WTC11 (cell line): ENCODE measurements at regions of chr14 and their contacts with region 1.

Region 1: DNA sequence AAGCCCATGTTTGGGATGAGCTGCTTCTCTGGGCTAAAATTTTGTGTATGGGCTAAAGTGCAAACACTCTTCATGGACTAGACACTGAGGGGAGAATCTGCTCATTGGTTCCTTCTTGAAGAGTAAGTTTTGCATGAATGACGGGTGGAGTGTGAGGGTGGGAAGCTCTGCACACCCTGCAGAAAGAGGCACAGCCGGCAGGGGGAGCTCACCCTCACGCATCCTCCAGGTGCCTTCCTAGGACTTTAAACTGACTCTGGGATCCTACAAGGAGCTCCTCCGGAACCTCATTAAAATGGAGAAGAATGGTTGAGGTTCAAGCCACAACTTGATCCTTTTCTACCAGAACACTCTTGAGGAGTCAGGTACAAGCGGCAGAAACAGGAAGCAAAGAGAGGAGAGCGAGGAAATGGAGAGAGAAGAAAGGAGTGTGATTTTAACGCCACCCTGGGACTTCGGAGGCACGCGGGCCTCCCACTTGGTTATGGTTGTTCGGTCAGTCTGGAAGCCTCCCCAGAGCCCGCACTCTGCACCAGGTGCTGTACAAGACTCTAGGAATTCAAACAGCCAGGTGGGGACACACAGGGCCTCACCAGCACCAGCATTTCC is 87.5 kb downstream of the SETD3 start:
- DNase-seq: peak; percentile 74
- ATAC-seq: peak; percentile 71
- H3K4me3 Mint-ChIP-seq: no peak overlapping the region
- H3K27ac Mint-ChIP-seq: peak overlapping the region; percentile 92; the same call in 1 of the 2 replicates
- H3K4me1 Mint-ChIP-seq: peaks cover 37% of the 10 kb centered on the region
- H3K27me3 Mint-ChIP-seq: no peaks in the 10 kb centered on the region
- CTCF ChIP-seq: peak; percentile 89

Region 2: GRCh38 chr14:98994561-98994960 is 398.6 kb before region 1 on chr14:
- CTCF ChIA-PET with region 1: no interaction called
- POLR2A ChIA-PET with region 1: no interaction called
- DNase-seq: no peak
- ATAC-seq: no peak
- H3K4me3 Mint-ChIP-seq: no peak overlapping the region
- H3K27ac Mint-ChIP-seq: no peak overlapping the region
- H3K4me1 Mint-ChIP-seq: peaks cover 32% of the 10 kb centered on the region
- H3K27me3 Mint-ChIP-seq: peaks cover 16% of the 10 kb centered on the region
- CTCF ChIP-seq: no peak

Region 3: DNA sequence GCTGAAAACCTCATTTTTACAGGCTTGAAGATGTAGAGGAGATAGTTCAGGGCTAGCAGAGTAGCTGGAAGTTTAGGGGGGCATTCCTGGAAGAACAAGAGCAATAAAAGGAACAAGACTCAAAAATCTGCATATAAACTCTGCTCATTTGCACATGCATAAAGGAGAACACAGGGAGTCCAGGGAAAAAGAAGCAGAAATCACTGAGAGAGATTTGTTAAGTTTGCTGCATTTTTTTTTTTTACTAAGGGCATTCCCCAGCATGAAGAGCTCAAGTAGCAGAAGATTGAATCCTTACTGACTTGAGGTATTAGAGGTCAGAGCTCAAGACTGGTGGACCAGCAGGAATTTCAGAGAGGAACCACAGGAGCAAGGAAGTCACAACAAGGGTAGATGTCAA is 93.0 kb before region 1 on chr14:
- CTCF ChIA-PET with region 1: interaction called, 13 read pairs
- POLR2A ChIA-PET with region 1: no interaction called
- DNase-seq: no peak
- ATAC-seq: peak; percentile 85
- H3K4me3 Mint-ChIP-seq: no peak overlapping the region; the same call in 1 of the 2 replicates
- H3K27ac Mint-ChIP-seq: peak overlapping the region; percentile 83
- H3K4me1 Mint-ChIP-seq: peaks cover 12% of the 10 kb centered on the region
- H3K27me3 Mint-ChIP-seq: peaks cover 7% of the 10 kb centered on the region
- CTCF ChIP-seq: no peak

Region 4: GRCh38 chr14:99351166-99352007 is 41.8 kb before region 1 on chr14:
- CTCF ChIA-PET with region 1: interaction called, 13 read pairs
- POLR2A ChIA-PET with region 1: no interaction called
- DNase-seq: no peak
- ATAC-seq: 0 out of 2 replicates have a peak, but pooled peaks have one; percentile 20
- H3K4me3 Mint-ChIP-seq: no peak overlapping the region
- H3K27ac Mint-ChIP-seq: no peak overlapping the region
- H3K4me1 Mint-ChIP-seq: peaks cover 2% of the 10 kb centered on the region; the same call in 1 of the 2 replicates
- H3K27me3 Mint-ChIP-seq: no peaks in the 10 kb centered on the region
- CTCF ChIP-seq: no peak

Region 5: GRCh38 chr14:99378782-99379214 is 14.4 kb before region 1 on chr14:
- CTCF ChIA-PET with region 1: interaction called, 106 read pairs
- POLR2A ChIA-PET with region 1: no interaction called
- DNase-seq: no peak
- ATAC-seq: no peak
- H3K4me3 Mint-ChIP-seq: no peak overlapping the region
- H3K27ac Mint-ChIP-seq: no peak overlapping the region
- H3K4me1 Mint-ChIP-seq: peaks cover 16% of the 10 kb centered on the region
- H3K27me3 Mint-ChIP-seq: no peaks in the 10 kb centered on the region
- CTCF ChIP-seq: no peak

Region 6: DNA sequence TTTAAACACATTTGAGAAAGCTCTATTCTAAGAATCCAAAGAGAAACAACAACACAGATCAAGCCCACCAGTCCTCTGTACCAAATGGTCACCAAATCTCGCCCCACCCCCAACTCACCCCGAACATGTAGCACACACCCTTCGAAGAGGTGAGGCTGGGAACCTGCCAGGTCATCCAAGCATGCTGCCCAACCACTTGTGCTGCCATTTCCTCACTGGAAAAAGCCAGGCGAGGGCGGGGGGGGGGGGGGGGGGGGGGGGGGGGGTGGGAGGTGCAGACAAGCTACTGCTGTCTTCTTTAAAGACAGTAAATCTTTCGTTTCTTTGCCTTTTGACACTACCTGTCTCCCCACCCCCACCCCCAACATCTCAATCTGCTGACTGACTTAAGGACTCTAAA is 27.6 kb after region 1 on chr14:
- CTCF ChIA-PET with region 1: interaction called, 416 read pairs
- POLR2A ChIA-PET with region 1: interaction called, 4 read pairs
- DNase-seq: peak; percentile 30
- ATAC-seq: no peak; the same call in 1 of the 2 replicates
- H3K4me3 Mint-ChIP-seq: no peak overlapping the region
- H3K27ac Mint-ChIP-seq: peak overlapping the region; percentile 25
- H3K4me1 Mint-ChIP-seq: peaks cover 51% of the 10 kb centered on the region
- H3K27me3 Mint-ChIP-seq: no peaks in the 10 kb centered on the region
- CTCF ChIP-seq: no peak

Region 7: DNA sequence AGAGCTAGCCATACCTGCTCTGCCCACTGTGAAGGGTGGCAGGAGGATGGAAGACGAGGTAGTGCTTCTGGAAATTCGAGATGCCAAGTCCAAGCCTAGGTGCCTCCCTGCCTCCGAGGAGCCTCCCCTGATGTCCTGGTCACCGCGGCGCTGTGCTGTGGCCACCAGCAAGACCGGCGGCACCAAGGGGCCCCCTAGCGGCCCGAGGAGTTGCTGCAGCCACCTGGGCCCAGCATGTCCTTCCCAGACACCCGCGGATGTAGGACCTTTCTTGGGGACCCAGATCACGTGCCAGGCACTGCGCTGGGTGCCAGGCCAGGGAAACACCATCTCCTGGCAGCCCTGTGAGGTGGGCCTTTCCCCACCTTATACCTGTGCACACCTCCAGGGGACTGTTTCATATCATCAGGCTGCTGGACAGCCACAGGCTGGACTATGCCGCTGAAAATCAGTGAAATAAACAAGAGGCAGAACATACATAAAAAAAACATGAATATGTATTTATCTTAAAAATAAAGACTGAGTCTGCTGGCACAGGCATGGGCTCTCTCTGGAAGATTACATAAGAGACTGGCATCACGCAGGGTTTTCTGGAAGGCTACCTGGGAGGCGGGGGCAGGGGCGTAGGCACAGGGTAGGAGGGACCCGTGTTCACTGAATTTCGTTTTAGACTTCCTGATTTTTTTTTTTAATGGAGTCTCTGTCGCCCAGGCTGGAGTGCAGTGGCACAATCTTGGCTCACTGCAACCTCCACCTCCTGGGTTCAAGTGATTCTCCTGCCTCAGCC is 235.9 kb after region 1 on chr14:
- CTCF ChIA-PET with region 1: no interaction called
- POLR2A ChIA-PET with region 1: no interaction called
- DNase-seq: peak; percentile 84
- ATAC-seq: peak; percentile 91
- H3K4me3 Mint-ChIP-seq: no peak overlapping the region
- H3K27ac Mint-ChIP-seq: no peak overlapping the region
- H3K4me1 Mint-ChIP-seq: peaks cover 15% of the 10 kb centered on the region
- H3K27me3 Mint-ChIP-seq: no peaks in the 10 kb centered on the region
- CTCF ChIP-seq: peak; percentile 98